Body of pancreas (tissue), 4 donors: ENCODE measurements at regions of chr4 and their contacts with region 1.

Region 1: GRCh38 chr4:76931087-76931486 is 18.5 kb upstream of the SEPTIN11 start:
- DNase-seq: no peak
- ATAC-seq: no peak
- H3K4me3 ChIP-seq: no peak overlapping the region
- H3K27ac ChIP-seq: no peak overlapping the region
- H3K4me1 ChIP-seq: peaks cover 10% of the 10 kb centered on the region
- H3K27me3 ChIP-seq: no peaks in the 10 kb centered on the region
- CTCF ChIP-seq: no peak
- POLR2A ChIP-seq: no peak

Region 2: DNA sequence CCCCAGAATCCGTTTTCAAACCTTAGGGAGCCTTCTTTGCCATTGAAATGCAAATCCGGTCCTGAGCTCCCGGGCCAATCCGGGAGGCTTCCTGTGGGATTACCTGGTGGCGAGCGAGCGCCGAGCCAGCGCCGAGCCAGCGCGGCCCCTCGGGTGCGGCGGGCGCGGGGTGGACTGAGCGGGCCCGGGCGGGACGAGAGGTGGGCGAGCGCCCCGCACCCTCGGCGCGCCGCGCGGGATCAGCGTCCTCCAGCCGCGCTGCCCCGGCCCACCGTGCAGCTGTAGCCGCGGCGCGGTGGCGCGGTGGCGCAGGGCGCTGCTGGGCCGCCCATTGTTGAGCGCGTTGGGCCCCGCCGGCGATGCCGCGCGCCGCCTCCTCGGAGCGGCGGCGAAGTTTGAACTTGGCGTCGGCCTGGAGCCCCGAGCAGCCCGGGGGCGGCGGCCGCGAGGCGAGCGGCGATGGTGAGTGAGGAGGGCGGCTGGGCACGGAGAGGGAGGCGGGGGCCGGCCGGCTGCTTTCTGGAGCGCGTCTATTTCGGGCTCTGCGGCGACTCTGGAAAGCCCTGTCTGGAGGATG is 241.8 kb before region 1 on chr4:
- intact Hi-C with region 1: no loop called
- DNase-seq: peak; percentile 61 to 76 (median 66)
- ATAC-seq: peak; percentile 81
- H3K4me3 ChIP-seq: peak overlapping the region; percentile 3 to 31
- H3K27ac ChIP-seq: peak overlapping the region; percentile 72 to 92 (median 78)
- H3K4me1 ChIP-seq: peaks cover 43% of the 10 kb centered on the region
- H3K27me3 ChIP-seq: no peaks in the 10 kb centered on the region
- CTCF ChIP-seq: peak in 2 of 7 experiments; percentile 21 to 31
- POLR2A ChIP-seq: peak; percentile 23 to 50 (median 29)

Region 3: DNA sequence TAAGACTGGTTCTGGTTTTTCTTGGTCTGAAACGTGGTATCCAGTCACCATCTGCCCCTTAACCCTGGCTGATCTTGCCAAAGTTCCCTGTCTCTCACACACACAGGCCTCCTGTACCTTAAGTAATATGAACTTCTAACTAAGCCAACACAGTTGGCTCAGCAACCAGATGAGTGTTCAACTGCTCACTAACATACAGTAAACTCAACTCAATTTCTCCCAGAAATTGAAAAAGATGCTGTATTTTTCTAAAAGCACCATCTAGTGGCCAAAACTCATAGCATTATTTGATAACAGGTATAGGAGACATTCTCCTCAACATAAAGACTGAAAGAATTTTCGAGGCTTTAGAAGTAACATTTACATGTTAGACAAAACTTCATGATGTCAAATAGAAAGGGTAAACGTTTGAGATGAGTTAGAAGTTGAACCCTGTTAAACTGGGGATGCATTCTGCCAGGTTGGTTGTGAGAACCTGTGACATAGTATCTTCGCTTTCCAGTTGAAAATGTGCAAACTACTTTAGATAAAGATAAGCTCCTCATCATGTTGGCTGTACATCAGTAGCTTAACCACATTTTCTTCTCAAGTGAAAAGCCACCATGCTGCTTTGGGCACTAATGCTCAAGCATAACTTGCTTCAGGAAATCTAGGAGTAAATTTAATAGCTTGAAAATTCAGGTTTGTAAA is 113.5 kb after region 1 on chr4:
- intact Hi-C with region 1: loop called (anchors 10 kb)
- DNase-seq: no peak
- ATAC-seq: peak; percentile 42
- H3K4me3 ChIP-seq: no peak overlapping the region
- H3K27ac ChIP-seq: no peak overlapping the region
- H3K4me1 ChIP-seq: no peaks in the 10 kb centered on the region
- H3K27me3 ChIP-seq: no peaks in the 10 kb centered on the region
- CTCF ChIP-seq: peak; percentile 36 to 59 (median 53)
- POLR2A ChIP-seq: no peak